CD8-positive, alpha-beta T cell (primary cell): ENCODE measurements at regions of chr4 and their contacts with region 1.

Region 1: GRCh38 chr4:70651864-70652506 is 14.3 kb downstream of the JCHAIN start:
- DNase-seq: peak in 2 of 9 experiments; percentile 38 to 54
- ATAC-seq: no peak
- H3K4me3 ChIP-seq: no peak overlapping the region
- H3K4me3 Mint-ChIP-seq: no peak overlapping the region
- H3K27ac ChIP-seq: no peak overlapping the region
- H3K27ac Mint-ChIP-seq: no peak overlapping the region
- H3K4me1 ChIP-seq: no peaks in the 10 kb centered on the region
- H3K4me1 Mint-ChIP-seq: peaks cover 6% of the 10 kb centered on the region
- H3K27me3 ChIP-seq: peaks cover 0 to 4% of the 10 kb centered on the region in 2 experiments
- H3K27me3 Mint-ChIP-seq: no peaks in the 10 kb centered on the region
- CTCF ChIP-seq: peak; percentile 68

Region 2: GRCh38 chr4:70687821-70688794 is 36.1 kb after region 1 on chr4 and contains the start of gene UTP3:
- CTCF ChIA-PET with region 1: interaction called, 6 read pairs
- POLR2A ChIA-PET with region 1: no interaction called
- intact Hi-C with region 1: loop called in 1 of 2 experiments (anchors 5 kb)
- DNase-seq: peak; percentile 84 to 98 (median 93)
- ATAC-seq: peak; percentile 89
- H3K4me3 ChIP-seq: peak within 1 kb of the TSS; percentile 78 to 84
- H3K4me3 Mint-ChIP-seq: peak within 1 kb of the TSS; percentile 98
- H3K27ac ChIP-seq: peak within 1 kb of the TSS; percentile 85 to 92
- H3K27ac Mint-ChIP-seq: peak within 1 kb of the TSS; percentile 99
- H3K4me1 ChIP-seq: peaks cover 21% of the 10 kb centered on the region
- H3K4me1 Mint-ChIP-seq: peaks cover 44% of the 10 kb centered on the region
- H3K27me3 ChIP-seq: no peaks in the 10 kb centered on the region
- H3K27me3 Mint-ChIP-seq: no peaks in the 10 kb centered on the region
- CTCF ChIP-seq: peak; percentile 96
- total RNA-seq, gene UTP3: 21.6 to 23.1 TPM

Region 3: DNA sequence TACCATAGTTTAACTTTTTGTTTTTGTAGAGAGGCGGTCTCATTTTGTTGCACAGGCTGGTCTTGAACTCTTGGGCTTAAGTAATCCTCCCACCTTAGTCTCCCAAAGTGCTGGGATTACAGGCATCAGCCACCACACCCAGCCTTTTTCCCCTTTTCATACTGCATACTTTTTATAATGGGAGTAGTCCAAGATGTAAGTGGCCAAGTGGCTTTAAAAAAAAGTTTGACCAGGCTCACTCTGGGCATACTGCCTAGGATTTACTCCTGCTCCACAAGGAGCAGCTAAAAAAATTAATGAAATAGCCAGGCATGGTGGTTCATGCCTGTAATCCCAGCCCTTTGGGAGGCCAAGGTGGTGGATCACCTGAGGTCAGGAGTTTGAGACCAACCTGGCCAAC is 181.7 kb after region 1 on chr4:
- CTCF ChIA-PET with region 1: no interaction called
- POLR2A ChIA-PET with region 1: no interaction called
- intact Hi-C with region 1: loop called in 1 of 2 experiments (anchors 10 kb)
- DNase-seq: no peak
- ATAC-seq: no peak
- H3K4me3 ChIP-seq: no peak overlapping the region
- H3K4me3 Mint-ChIP-seq: no peak overlapping the region
- H3K27ac ChIP-seq: no peak overlapping the region
- H3K27ac Mint-ChIP-seq: no peak overlapping the region
- H3K4me1 ChIP-seq: peaks cover 29% of the 10 kb centered on the region
- H3K4me1 Mint-ChIP-seq: peaks cover 36% of the 10 kb centered on the region
- H3K27me3 ChIP-seq: no peaks in the 10 kb centered on the region
- H3K27me3 Mint-ChIP-seq: no peaks in the 10 kb centered on the region
- CTCF ChIP-seq: no peak

Region 4: DNA sequence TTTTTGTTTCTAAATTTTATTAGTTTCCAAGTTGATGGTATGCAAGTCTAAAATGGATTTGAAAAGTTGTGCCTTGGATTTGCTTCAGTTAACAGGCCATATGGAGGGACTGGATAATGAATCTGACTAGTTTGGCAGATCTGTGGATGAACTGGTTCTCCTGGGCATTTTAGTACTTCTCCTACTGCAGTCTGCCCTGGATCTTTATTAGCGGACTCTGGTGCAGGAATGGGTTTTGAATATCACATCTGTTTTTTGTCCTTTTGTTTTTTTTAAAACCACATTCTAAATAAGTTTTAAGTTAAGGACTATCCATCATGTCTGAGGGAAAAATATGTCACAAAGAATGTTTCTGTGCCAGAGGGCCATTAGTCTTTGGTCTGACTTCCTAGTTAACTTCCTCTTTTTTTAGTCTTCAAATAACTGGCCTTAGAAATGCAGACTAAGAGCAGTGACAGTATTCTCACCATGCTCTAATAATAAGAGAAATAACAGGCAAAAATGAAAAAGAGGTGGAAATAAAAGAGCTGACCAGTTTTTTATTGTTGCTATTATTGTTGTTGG is 327.5 kb after region 1 on chr4:
- CTCF ChIA-PET with region 1: interaction called, 4 read pairs
- POLR2A ChIA-PET with region 1: no interaction called
- intact Hi-C with region 1: loop called (anchors 5 to 10 kb)
- DNase-seq: no peak
- ATAC-seq: no peak
- H3K4me3 ChIP-seq: no peak overlapping the region
- H3K4me3 Mint-ChIP-seq: no peak overlapping the region
- H3K27ac ChIP-seq: no peak overlapping the region
- H3K27ac Mint-ChIP-seq: no peak overlapping the region
- H3K4me1 ChIP-seq: no peaks in the 10 kb centered on the region
- H3K4me1 Mint-ChIP-seq: no peaks in the 10 kb centered on the region
- H3K27me3 ChIP-seq: no peaks in the 10 kb centered on the region
- H3K27me3 Mint-ChIP-seq: no peaks in the 10 kb centered on the region
- CTCF ChIP-seq: no peak

Region 5: GRCh38 chr4:71713611-71714203 is 1061.7 kb after region 1 on chr4:
- CTCF ChIA-PET with region 1: interaction called, 11 read pairs
- POLR2A ChIA-PET with region 1: no interaction called
- intact Hi-C with region 1: loop called in 1 of 2 experiments (anchors 5 kb)
- DNase-seq: peak in 2 of 9 experiments; percentile 46 to 54
- ATAC-seq: no peak
- H3K4me3 ChIP-seq: no peak overlapping the region
- H3K4me3 Mint-ChIP-seq: no peak overlapping the region
- H3K27ac ChIP-seq: no peak overlapping the region
- H3K27ac Mint-ChIP-seq: no peak overlapping the region
- H3K4me1 ChIP-seq: no peaks in the 10 kb centered on the region
- H3K4me1 Mint-ChIP-seq: no peaks in the 10 kb centered on the region
- H3K27me3 ChIP-seq: no peaks in the 10 kb centered on the region
- H3K27me3 Mint-ChIP-seq: no peaks in the 10 kb centered on the region
- CTCF ChIP-seq: peak; percentile 52